Psoas muscle (tissue), 8 donors: ENCODE measurements at regions of chr22 and their contacts with region 1.

Region 1: DNA sequence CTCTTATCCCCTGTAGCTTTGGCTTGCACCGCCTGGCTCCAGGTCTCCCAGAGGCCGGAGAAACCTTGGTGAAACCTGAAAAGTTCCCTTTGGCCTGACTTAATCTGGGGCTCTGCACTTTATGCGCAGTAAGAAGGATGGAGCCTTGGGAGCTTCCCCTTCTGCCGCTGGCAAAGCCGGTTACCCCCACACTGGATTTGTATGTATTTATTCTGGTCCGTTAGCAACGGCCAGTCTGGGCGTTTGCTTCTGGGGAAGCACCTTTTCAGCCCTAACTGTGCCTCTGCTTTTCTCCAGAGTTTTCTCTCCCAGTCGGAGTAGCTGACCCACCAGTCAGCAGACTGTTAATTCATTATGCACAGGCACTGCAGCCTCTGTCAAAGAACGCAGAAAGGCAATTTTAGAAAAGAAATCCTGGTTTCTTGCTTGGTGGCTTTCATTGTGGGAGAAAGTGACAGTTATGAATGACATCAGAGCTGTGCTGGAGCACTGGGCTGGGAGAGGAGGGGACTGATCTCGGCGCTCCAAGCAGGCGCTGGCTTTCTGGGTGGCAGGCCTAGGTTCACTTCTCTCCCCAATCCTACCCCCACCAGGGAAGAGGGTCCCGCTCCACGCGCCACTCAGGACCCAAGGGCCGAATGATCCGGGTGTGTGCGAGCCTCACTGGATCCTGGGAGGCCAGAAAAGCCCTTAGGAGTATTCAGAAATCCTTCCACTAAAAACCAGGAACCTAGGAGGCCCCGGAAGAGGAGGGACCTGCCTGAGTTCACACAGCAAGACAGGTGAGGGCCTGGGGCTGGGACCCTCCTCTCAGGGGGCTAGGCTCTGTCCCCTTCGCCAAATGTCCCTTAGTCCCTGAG is 70.2 kb downstream of the RTL6 start:
- DNase-seq: no peak
- ATAC-seq: no peak
- H3K4me3 ChIP-seq: no peak overlapping the region
- H3K27ac ChIP-seq: no peak overlapping the region
- H3K4me1 ChIP-seq: no peaks in the 10 kb centered on the region
- H3K27me3 ChIP-seq: peaks cover 0 to 39% (median 12%) of the 10 kb centered on the region in 3 donors
- CTCF ChIP-seq: no peak

Region 2: DNA sequence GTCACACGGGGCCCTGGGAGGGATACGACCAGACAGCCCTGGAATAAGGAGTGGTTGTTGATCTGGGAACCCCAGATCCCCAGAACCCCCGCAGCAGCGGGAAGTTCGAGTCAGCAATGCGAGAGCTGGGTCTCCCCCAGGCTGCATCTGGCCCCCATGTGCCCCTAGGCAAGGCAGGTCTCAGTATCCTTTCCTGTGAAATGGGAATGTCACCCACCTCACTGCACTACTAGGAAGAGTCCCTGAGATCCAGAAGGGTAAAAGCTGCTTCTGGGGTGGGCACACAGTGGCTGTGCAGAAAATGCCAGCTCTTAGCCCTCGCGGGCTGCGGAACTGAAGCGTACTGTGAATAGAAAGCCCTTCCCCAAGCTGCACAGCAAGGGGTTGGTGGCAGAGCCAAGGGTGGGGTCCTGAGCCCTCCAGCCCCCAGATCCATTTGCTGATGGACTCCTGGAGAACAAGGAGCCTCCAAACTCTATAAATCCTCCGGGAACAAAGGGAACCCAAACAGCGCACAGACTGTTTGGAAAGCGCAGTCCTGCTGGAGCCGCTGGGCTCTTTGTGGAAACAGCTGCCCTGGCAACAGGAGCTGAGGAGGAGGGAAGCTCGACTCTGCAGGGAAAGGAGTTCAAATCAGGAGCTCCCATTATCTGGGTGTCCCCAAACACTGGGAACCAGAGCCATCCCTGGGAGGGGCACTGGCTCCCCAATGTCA is 46.9 kb before region 1 on chr22:
- intact Hi-C with region 1: no loop called
- DNase-seq: peak; percentile 9 to 48
- ATAC-seq: no peak
- H3K4me3 ChIP-seq: no peak overlapping the region
- H3K27ac ChIP-seq: no peak overlapping the region
- H3K4me1 ChIP-seq: no peaks in the 10 kb centered on the region
- H3K27me3 ChIP-seq: peaks cover 0 to 14% (median 3%) of the 10 kb centered on the region in 3 donors
- CTCF ChIP-seq: no peak

Region 3: DNA sequence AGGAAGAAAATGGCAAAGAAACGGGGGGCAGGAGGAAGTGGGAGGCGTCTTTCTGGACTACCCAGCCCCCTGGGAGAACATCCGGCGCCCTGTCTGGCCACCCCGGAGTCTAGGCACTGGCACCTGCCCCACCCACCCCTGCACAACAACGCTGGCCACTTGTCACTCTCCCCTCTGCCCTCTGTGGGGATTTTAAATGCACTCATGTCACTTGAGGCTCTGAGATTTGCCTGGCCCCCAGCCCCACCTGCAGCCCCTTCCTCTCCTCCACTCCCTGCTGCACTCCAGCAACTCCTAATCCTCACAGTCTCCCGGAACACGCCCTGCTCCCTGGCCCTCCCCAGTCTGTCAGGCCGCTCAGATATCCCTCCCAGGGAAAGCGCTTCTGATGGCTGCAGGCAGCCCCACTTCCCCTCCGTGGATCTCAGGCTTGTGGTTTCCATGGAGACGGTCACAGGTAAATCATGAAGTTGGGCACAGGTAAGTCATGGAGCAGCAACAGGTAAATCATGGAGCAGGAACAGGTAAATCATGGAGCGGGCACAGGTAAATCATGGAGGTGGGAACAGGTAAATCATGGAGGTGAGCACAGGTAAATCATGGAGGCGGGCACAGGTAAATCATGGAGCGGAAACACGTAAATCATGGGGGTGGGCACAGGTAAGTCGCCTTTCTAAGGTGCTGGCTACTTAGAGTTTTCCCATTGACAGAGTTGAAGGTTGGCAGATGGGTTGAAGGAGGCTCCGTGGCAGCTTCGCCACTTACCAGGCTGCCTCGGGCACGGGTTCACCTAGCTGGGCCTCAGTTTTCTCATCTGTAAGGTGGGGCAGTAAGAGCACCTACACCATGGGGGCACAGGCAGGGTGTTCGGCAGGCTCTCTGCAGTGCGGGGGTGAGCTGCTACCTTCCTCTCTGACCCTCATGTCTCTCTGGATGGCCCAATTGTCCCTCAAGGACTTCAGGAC is 36.1 kb before region 1 on chr22:
- intact Hi-C with region 1: loop called in 1 of 2 experiments (anchors 2 kb)
- DNase-seq: peak; percentile 0 to 6
- ATAC-seq: no peak
- H3K4me3 ChIP-seq: no peak overlapping the region
- H3K27ac ChIP-seq: no peak overlapping the region
- H3K4me1 ChIP-seq: no peaks in the 10 kb centered on the region
- H3K27me3 ChIP-seq: peaks cover 0 to 32% (median 5%) of the 10 kb centered on the region in 3 donors
- CTCF ChIP-seq: no peak